Posterior cingulate gyrus (tissue), 11 donors: ENCODE measurements at regions of chr17 and their contacts with region 1.

Region 1: DNA sequence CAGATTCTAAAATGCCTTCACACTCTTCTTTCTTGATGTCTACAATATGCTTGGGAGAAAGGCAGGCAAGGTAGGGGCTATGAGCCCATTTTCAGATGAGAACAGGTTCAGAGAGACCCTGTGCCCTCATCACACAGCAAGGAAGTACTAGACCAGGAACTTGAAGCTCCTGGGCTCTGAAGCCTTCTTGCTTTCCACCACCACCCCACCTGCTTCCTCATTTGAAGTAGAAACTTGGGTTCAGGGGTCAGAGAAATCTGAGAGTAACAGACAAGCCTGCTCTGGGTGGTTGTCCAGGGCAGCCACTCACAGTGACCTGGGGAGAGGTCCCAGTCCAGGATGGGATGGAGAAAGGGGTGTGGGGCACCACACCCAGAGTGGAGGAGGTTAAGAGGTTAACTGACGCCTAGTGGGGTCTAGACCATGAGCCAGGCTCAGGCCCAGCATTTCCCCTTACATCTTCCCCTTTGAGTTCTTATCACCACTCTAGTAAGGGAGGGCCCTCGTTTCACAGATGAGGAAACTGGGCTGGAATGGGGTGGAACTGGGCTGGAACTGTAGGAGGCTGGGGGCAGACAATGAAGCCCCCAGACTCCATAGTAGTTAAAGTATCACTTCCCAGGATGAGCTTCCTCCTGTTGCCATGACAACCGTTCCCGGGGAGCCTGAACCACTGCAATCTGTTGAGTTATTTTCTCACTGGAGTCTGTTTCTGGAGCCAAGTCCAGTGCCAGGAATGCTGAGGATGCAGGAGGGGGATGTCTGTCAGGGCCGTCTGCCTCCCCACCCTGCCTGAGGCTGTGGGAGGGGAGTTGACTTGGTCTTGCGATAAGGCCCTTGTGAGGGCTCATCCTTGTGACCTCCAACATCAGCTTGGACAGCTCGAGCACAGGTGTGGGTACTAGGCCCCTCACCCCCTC is 16.2 kb upstream of the PHF12 start:
- DNase-seq: peak in 3 of 10 donors; percentile 52 to 85 (median 69)

Region 2: DNA sequence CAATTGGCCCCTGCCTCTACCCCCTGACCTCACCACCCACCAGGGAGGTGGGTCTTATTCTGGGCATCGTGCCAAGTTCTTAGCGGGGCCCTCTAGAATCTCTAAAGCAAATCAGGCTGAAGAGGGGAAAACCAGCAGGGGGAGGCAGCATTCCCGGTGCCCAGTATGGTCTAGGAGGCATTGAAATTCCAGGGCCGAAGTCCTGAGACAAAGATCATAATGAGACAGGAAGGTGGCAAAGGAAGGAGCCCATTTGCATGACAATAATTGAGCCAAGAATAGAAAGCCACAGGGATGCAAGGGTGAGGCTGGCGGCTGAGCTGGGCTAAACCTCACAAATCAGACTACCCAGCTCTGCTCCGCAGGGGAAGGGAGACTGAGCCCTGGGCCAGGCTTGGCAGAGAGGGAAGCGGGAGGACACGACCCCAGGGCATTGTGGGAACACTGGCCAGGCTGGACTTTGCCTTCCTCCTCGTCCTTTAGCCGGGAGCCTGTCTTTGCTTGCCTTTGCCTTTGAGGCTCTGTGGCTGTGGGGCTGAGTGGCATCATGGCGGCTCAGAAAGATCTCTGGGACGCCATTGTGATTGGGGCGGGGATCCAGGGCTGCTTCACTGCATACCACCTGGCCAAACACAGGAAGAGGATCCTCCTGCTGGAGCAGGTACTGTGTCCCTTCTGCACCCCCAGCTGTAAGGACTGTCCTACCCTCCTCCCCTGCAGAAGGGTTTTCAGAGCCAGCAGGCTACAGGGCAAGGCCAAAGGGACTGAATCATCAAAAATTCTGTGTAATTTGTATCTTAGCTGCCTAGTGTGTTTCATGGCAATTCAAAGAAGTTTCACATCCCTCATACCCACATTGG is 75.4 kb after region 1 on chr17 and contains the start of gene PIPOX:
- intact Hi-C with region 1: loop called (anchors 2 kb)
- DNase-seq: peak in 8 of 10 donors; percentile 24 to 88 (median 46)

Region 3: DNA sequence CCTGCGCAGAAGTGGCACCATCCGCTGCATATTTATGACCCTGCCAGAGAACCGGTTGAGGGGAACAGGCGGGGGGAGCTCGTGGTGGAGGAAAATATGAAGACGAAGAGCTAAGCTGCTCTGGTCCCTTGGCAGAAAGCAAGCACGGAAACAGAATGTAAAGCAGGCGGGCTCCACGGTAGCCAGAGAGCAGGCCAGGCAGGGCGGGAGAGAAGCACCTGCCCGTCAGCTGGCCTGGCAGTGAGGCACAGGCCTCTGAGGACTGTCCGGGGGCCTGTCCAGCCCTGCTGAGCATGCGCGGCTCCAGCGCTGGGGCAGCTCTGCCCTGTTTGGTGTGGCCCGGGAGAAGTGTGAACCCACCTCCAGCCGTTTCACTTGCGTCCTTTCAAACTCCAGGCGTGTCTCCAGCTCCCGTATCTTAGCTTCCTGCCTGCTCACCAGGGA is 122.1 kb after region 1 on chr17:
- intact Hi-C with region 1: loop called (anchors 5 kb)
- DNase-seq: peak; percentile 50 to 93 (median 66)

Region 4: GRCh38 chr17:29116804-29117772 is 149.6 kb after region 1 on chr17:
- intact Hi-C with region 1: loop called (anchors 1 kb)
- DNase-seq: peak; percentile 57 to 97 (median 86)